H1 (cell line): ENCODE measurements at regions of chr11 and their contacts with region 1.

Region 1: GRCh38 chr11:777288-778255 is at the start of gene GATD1:
- DNase-seq: peak in 1 of 2 experiments; percentile 98
- H3K4me3 ChIP-seq: peak within 1 kb of the TSS; percentile 77 to 91 (median 85)
- H3K27ac ChIP-seq: peak within 1 kb of the TSS; percentile 91; the same call in 1 of the 2 replicates
- H3K4me1 ChIP-seq: peaks cover 3 to 25% (median 12%) of the 10 kb centered on the region in 4 experiments
- H3K27me3 ChIP-seq: no peaks in the 10 kb centered on the region; a peak in 1 of 7 replicates
- CTCF ChIP-seq: 0 out of 4 replicates have a peak, but pooled peaks of 1 of the 3 experiments have one; percentile 7
- EP300 ChIP-seq: no peak
- POLR2A ChIP-seq: peak in 1 of 2 experiments; percentile 80; a peak in 2 of 3 replicates
- RAD21 ChIP-seq: no peak
- total RNA-seq, gene GATD1: 47.5 and 54.9 TPM in 2 replicates

Region 2: GRCh38 chr11:765025-765801 is 12.4 kb before region 1 on chr11:
- CTCF ChIA-PET with region 1: interaction called, 15 read pairs
- POLR2A ChIA-PET with region 1: interaction called, 636 read pairs
- DNase-seq: peak in 1 of 2 experiments; percentile 87
- H3K4me3 ChIP-seq: no peak overlapping the region
- H3K27ac ChIP-seq: no peak overlapping the region
- H3K4me1 ChIP-seq: peaks cover 0 to 12% (median 7%) of the 10 kb centered on the region in 4 experiments; a peak in 6 of 7 replicates
- H3K27me3 ChIP-seq: no peaks in the 10 kb centered on the region
- CTCF ChIP-seq: peak; percentile 66 to 94 (median 82)
- EP300 ChIP-seq: no peak
- POLR2A ChIP-seq: peak in 1 of 2 experiments; percentile 60; a peak in 1 of 3 replicates
- RAD21 ChIP-seq: peak; percentile 86 to 87

Region 3: DNA sequence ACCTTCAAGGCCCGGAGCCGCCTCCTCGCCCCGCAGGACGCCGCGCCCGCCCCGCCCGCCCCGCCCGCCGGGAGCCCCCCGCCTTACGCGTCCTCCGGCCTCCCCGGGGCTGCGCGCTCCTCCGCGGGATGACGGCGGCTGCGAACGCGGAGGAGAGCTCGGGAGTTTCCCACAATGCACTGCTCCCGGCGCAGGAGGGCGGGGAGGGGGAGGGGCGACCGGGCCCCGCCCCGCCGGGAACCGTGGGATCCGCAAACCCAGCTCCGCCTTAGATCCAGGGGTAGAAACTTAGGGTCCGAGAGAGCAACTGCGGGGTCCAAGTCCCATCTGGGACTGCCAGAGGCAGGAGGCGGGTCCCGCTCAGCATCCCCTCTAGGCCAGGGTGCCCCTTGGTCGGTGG is 12.4 kb after region 1 on chr11 and contains the start of gene CEND1:
- CTCF ChIA-PET with region 1: interaction called, 14 read pairs
- POLR2A ChIA-PET with region 1: interaction called, 43 read pairs
- DNase-seq: peak in 1 of 2 experiments; percentile 79
- H3K4me3 ChIP-seq: peak within 1 kb of the TSS in 2 of 4 experiments; percentile 11 to 44; a peak in 3 of 8 replicates
- H3K27ac ChIP-seq: no peak within 1 kb of the TSS
- H3K4me1 ChIP-seq: peaks cover 0 to 18% (median 11%) of the 10 kb centered on the region in 4 experiments; a peak in 6 of 7 replicates
- H3K27me3 ChIP-seq: no peaks in the 10 kb centered on the region
- CTCF ChIP-seq: no peak
- EP300 ChIP-seq: no peak
- POLR2A ChIP-seq: no peak
- RAD21 ChIP-seq: no peak
- total RNA-seq, gene CEND1: 5.0 and 5.7 TPM in 2 replicates

Region 4: DNA sequence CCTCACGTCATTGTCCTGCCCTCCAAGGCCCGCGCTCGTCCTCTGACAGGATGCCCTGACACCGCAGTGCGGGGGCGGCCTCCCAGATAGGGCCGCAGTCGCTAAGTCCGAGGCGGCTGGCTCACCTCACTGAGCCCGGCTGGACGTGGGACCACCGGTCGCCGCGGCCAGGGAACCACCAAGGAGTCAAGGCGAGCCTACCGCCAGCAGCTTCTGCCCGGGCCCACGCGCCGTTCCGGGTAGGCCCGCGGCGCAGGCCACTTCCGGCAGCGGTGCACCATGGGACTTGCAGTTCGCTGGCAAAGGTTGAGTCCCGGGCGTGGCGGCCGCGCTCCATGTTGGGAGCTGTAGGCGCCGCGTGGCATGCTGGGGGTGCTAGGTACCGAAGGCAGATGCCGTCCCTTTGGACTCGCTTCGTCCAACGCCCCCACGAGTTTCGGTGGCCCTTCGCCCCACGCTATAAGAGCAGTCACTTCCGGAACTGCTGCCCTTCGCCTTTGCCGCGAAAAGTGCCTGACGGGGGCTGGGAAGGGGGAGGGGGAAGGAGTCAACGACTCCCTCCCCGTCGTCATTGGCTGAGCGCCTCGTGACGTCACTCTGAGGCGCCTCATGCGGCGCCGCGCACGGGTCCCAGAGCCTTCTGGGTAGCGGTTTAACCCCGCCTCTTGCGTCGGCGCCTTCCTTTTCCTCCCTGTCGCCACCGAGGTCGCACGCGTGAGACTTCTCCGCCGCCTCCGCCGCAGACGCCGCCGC is 31.9 kb after region 1 on chr11 and contains the start of gene RPLP2:
- CTCF ChIA-PET with region 1: no interaction called
- POLR2A ChIA-PET with region 1: interaction called, 34 read pairs
- DNase-seq: peak; percentile 80 to 100
- H3K4me3 ChIP-seq: peak within 1 kb of the TSS; percentile 66 to 100 (median 90)
- H3K27ac ChIP-seq: peak within 1 kb of the TSS; percentile 99
- H3K4me1 ChIP-seq: peaks cover 0 to 10% (median 3%) of the 10 kb centered on the region in 4 experiments; a peak in 4 of 7 replicates
- H3K27me3 ChIP-seq: no peaks in the 10 kb centered on the region
- CTCF ChIP-seq: no peak
- EP300 ChIP-seq: no peak; a peak in 1 of 3 replicates
- POLR2A ChIP-seq: peak in 1 of 2 experiments; percentile 90; a peak in 2 of 3 replicates
- RAD21 ChIP-seq: no peak
- total RNA-seq, gene RPLP2: 2,084 and 2,106 TPM in 2 replicates